Endothelial cell of umbilical vein (primary cell): ENCODE measurements at regions of chr11 and their contacts with region 1.

Region 1: DNA sequence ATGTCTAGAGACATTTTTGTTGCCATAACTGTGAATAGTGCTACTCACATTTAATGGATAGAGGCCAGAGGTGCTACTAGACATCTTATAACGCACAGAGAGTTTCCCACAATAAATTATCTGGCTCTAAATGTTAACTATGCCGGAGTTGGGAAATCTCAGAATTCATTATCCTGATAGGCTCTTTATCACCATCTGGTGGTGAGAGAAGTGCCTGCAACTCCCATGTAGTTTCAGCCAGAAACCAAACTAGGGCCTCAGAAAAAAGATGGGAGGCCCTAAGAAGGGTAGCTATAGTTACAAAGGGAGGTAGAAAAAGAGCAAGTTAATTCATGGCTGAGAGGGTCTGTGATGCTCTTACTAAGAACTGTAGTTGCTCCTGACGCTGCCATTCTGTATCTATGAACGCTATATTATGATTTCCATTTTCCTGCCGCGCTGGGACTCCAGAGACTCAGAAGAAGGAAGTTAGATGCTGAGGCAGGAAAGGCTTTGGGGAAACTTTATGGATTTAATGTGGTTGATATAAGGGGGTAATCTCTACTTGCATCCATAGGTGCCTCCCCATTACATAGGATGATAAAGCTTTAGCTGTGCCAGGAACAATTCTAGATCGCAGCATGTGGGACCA is 22.9 kb upstream of the MRPL17 start:
- DNase-seq: peak; percentile 66
- H3K4me3 ChIP-seq: no peak overlapping the region
- H3K27ac ChIP-seq: no peak overlapping the region
- H3K4me1 ChIP-seq: peaks cover 6% of the 10 kb centered on the region
- H3K27me3 ChIP-seq: no peaks in the 10 kb centered on the region
- CTCF ChIP-seq: peak; percentile 72 to 78
- POLR2A ChIP-seq: no peak

Region 2: GRCh38 chr11:6523253-6523652 is 182.8 kb before region 1 on chr11:
- CTCF ChIA-PET with region 1: interaction called, 101 read pairs
- POLR2A ChIA-PET with region 1: no interaction called
- dilution Hi-C with region 1: no loop called
- intact Hi-C with region 1: no loop called
- DNase-seq: peak; percentile 53
- H3K4me3 ChIP-seq: no peak overlapping the region
- H3K27ac ChIP-seq: no peak overlapping the region
- H3K4me1 ChIP-seq: peaks cover 10% of the 10 kb centered on the region
- H3K27me3 ChIP-seq: no peaks in the 10 kb centered on the region
- CTCF ChIP-seq: no peak
- POLR2A ChIP-seq: no peak

Region 3: DNA sequence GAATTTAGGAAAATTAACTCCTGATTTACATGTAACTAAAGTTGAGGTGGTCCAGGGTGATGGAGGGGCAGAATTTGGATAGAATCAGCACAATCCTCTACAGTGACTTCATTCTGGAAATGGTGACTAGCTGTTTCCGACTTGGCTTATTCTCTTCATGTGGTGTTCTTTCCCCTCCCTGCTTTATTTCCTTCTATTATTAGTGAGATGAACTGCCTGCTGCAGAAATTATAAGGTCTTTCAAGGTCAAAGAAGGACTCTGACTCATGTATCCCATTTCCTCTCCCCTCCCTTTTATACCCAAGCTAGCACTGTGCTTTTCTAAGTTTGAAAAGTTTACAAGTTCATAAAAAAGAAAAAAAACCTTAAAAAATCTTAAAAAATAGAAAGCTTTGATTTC is 10.6 kb before region 1 on chr11:
- CTCF ChIA-PET with region 1: interaction called, 13 read pairs
- POLR2A ChIA-PET with region 1: interaction called, 3 read pairs
- dilution Hi-C with region 1: no loop called
- intact Hi-C with region 1: no loop called
- DNase-seq: peak; percentile 95
- H3K4me3 ChIP-seq: peak overlapping the region in 1 of 3 experiments; percentile 6
- H3K27ac ChIP-seq: peak overlapping the region; percentile 88
- H3K4me1 ChIP-seq: peaks cover 31% of the 10 kb centered on the region
- H3K27me3 ChIP-seq: no peaks in the 10 kb centered on the region
- CTCF ChIP-seq: no peak
- POLR2A ChIP-seq: no peak

Region 4: DNA sequence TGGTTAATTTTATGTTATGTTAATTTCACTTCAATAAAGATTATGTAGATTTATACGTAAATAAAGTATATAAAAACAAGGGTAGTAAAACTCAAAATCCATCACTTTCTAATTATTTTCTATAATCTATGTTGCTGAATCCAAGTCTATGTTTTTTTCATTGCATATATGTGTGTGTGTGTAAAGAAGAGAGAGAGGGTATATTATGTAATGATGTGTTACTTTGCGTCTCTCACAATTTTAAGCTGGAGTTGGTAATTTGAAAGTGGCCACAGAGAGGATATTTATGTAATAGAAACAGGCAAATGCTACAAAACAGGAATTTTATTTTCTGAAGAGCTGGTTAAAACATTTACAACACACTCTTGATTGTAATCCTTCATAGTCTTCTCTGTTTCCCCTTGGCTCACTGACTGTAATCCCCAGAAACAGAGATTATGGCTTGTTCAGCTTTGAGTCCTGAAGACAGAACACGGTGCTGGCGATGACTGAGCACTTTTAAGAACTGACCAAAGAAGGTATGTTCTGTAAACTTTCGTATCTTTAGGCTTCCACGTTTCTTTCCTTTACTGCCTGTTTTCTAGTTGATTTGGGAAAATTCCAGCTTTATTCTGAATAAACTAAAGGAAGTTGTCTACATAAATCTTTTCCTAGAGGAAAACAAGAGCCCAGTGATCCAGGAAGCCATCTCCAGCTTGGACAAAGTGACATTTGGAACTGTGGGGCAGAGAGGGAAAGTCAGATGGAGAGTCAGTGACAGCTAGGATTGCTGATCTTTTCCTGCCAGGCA is 22.1 kb after region 1 on chr11:
- CTCF ChIA-PET with region 1: interaction called, 14 read pairs
- POLR2A ChIA-PET with region 1: no interaction called
- dilution Hi-C with region 1: no loop called
- intact Hi-C with region 1: no loop called
- DNase-seq: peak; percentile 56
- H3K4me3 ChIP-seq: peak overlapping the region in 1 of 3 experiments; percentile 43
- H3K27ac ChIP-seq: no peak overlapping the region
- H3K4me1 ChIP-seq: peaks cover 20% of the 10 kb centered on the region
- H3K27me3 ChIP-seq: peaks cover 0 to 4% of the 10 kb centered on the region in 2 experiments
- CTCF ChIP-seq: no peak
- POLR2A ChIP-seq: no peak

Region 5: DNA sequence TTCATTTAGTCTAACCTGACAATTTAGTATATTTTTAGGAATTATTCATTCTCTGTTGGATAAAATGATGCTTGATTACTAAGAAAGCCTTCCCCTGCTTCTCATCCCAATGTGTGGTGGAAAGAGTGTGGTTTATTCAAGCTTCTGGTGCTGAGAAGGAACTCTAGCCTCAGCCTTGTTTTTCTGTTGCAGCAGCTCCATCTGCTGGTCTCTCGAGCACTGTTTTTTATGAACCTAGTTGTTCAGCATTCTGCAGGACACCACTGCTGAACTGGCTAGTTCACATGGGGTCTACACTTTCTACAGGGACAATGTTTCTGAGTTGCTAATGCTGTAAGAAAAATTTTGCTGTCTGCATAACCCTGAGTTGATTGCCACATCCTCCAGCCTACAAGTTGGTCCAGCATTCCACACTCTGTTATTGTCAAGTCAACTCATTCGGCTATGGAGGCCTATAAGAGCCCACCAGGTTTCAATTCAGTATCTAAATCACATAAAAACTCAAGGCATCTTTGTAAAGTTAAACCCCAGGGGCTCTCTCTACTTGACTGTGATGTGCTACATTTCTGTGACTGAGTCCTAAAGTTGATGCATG is 51.5 kb after region 1 on chr11:
- CTCF ChIA-PET with region 1: interaction called, 143 read pairs
- POLR2A ChIA-PET with region 1: no interaction called
- dilution Hi-C with region 1: no loop called
- intact Hi-C with region 1: loop called (anchors 1 kb)
- DNase-seq: peak; percentile 73
- H3K4me3 ChIP-seq: no peak overlapping the region
- H3K27ac ChIP-seq: no peak overlapping the region
- H3K4me1 ChIP-seq: no peaks in the 10 kb centered on the region
- H3K27me3 ChIP-seq: peaks cover 2 to 8% of the 10 kb centered on the region in 2 experiments
- CTCF ChIP-seq: peak; percentile 58 to 62
- POLR2A ChIP-seq: no peak

Region 6: GRCh38 chr11:6889835-6890234 is 183.8 kb after region 1 on chr11:
- CTCF ChIA-PET with region 1: no interaction called
- POLR2A ChIA-PET with region 1: no interaction called
- dilution Hi-C with region 1: no loop called
- intact Hi-C with region 1: no loop called
- DNase-seq: no peak
- H3K4me3 ChIP-seq: no peak overlapping the region
- H3K27ac ChIP-seq: no peak overlapping the region
- H3K4me1 ChIP-seq: no peaks in the 10 kb centered on the region
- H3K27me3 ChIP-seq: no peaks in the 10 kb centered on the region
- CTCF ChIP-seq: no peak
- POLR2A ChIP-seq: no peak